ENCODE measurements at regions of chr22 and their contacts with region 1.

Region 1: DNA sequence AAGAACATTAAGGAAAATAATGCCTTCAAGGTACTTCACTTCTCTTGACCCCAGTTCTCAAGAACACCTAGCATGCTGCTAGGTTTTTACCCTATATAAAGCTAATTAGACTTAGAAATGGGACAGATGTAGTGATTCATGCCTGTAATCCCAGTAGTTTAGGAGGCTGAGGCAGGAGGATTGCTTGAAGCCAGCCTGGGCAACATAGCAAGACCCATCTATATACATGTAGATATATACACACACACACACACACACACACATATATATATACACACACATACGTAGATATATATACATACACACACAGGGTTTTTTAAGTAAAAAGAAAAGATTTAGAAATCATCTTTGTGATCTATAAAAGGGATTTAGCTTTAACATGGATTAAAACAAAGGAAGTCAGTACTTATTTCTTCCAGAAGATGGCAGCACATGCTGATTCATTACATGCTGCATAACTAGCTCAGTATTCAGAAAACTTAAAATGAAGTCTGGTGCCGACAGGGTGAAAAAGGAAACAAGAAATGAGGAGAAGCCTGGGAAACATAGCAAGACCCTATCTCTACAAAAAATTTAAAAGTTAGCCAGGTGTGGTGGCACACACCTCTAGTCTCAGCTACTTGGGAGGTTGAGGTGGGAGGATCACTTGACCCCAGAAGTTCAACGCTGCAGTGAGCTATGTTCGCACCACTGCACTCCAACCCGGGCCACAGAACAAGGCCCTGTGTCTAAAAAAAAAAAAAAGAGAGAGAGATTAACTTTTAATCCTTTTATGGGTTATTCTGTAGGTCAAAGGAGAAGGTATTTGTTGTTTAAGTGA is 28.5 kb upstream of the RBX1 start:
- DNase-seq: peak; percentile 80 to 90 (median 84)
- H3K4me3 ChIP-seq: peak overlapping the region in 2 of 7 experiments; percentile 24 to 57
- H3K27ac ChIP-seq: no peak overlapping the region
- H3K4me1 ChIP-seq: no peaks in the 10 kb centered on the region
- H3K27me3 ChIP-seq: no peaks in the 10 kb centered on the region

Region 2: GRCh38 chr22:40939202-40939601 is 16.5 kb after region 1 on chr22:
- CTCF ChIA-PET with region 1: interaction called, 11 read pairs
- POLR2A ChIA-PET with region 1: no interaction called
- DNase-seq: no peak
- H3K4me3 ChIP-seq: no peak overlapping the region
- H3K27ac ChIP-seq: no peak overlapping the region
- H3K4me1 ChIP-seq: peaks cover 0 to 10% (median 5%) of the 10 kb centered on the region in 4 experiments
- H3K27me3 ChIP-seq: no peaks in the 10 kb centered on the region

Region 3: GRCh38 chr22:40950962-40951794 is 28.5 kb after region 1 on chr22 and contains the start of gene RBX1:
- CTCF ChIA-PET with region 1: interaction called, 11 read pairs
- POLR2A ChIA-PET with region 1: interaction called, 3 read pairs
- DNase-seq: peak; percentile 98 to 99 (median 99)
- H3K4me3 ChIP-seq: peak within 1 kb of the TSS; percentile 81 to 97 (median 91)
- H3K27ac ChIP-seq: peak within 1 kb of the TSS; percentile 79 to 92
- H3K4me1 ChIP-seq: peaks cover 8 to 30% (median 14%) of the 10 kb centered on the region in 4 experiments
- H3K27me3 ChIP-seq: no peaks in the 10 kb centered on the region

Region 4: DNA sequence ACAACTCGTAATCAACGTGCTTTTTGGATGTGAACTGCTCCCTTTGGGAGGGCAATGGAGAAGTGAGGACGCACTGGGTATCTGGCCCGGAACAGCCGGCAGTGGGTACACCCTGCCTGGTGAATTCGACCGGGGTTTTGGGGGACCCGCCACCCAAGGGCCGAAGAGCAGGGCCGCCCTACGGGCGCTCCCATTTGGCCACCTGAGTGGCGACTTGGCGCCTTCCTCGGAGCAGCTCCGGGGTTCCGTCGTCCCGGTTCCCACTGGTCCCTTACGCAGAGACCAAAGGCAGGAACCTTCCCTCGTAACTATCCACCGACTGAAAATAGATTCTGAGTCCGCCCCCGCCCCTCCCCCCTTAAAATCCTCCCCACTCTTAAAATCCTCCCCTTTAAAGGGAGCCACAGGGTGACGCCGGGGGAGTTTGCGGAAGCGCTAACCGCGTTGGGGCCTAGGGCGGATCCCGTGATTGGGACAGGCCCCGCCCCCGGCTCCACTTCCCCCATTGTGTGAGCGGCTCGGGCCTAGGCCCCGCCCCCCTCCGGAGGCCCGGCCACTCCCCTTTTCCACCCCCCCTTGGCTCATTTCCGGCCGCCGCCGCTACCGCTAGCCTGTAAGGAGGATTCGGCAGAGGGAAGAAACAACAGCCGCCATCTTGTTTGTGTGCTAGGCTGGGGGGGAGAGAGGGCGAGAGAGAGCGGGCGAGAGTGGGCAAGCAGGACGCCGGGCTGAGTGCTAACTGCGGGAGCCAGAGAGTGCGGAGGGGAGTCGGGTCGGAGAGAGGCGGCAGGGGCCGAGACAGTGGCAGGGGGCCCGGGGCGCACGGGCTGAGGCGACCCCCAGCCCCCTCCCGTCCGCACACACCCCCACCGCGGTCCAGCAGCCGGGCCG is 168.7 kb after region 1 on chr22:
- CTCF ChIA-PET with region 1: interaction called, 12 read pairs
- POLR2A ChIA-PET with region 1: interaction called, 5 read pairs
- DNase-seq: peak; percentile 99
- H3K4me3 ChIP-seq: peak overlapping the region; percentile 86 to 94 (median 91)
- H3K27ac ChIP-seq: peak overlapping the region; percentile 96 to 98
- H3K4me1 ChIP-seq: peaks cover 23 to 36% (median 30%) of the 10 kb centered on the region in 4 experiments
- H3K27me3 ChIP-seq: no peaks in the 10 kb centered on the region

Region 5: DNA sequence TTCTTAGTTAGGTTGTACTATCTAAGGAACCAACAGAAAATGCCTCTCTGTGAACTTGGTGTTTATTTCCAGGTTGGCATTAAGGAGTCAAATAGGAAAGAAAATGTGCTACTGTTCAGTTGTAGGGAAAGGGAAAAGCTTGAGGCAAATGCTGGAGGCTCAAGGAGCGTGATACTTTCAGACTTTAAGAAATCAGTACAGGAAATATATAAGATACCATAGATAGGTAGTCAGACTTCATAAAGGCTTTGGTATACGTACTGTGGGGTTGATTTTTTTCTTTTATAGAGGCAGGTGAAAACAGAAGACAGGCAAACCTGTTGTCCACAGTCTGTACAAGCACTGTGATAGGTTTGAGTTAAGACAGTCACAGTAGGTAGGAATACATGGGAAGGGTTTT is 200.5 kb after region 1 on chr22:
- CTCF ChIA-PET with region 1: interaction called, 13 read pairs
- POLR2A ChIA-PET with region 1: no interaction called
- DNase-seq: no peak
- H3K4me3 ChIP-seq: no peak overlapping the region
- H3K27ac ChIP-seq: no peak overlapping the region
- H3K4me1 ChIP-seq: peaks cover 0 to 2% (median 0%) of the 10 kb centered on the region in 4 experiments
- H3K27me3 ChIP-seq: no peaks in the 10 kb centered on the region

Region 6: GRCh38 chr22:41237707-41238569 is 315.2 kb after region 1 on chr22:
- CTCF ChIA-PET with region 1: interaction called, 23 read pairs
- POLR2A ChIA-PET with region 1: no interaction called
- DNase-seq: peak; percentile 82 to 91 (median 89)
- H3K4me3 ChIP-seq: peak overlapping the region; percentile 30 to 77 (median 59)
- H3K27ac ChIP-seq: no peak overlapping the region
- H3K4me1 ChIP-seq: peaks cover 0 to 24% (median 17%) of the 10 kb centered on the region in 4 experiments
- H3K27me3 ChIP-seq: no peaks in the 10 kb centered on the region